CD8-positive, alpha-beta T cell (primary cell): ENCODE measurements at regions of chr5 and their contacts with region 1.

Region 1: GRCh38 chr5:176537608-176538504 is 654 bp upstream of the RNF44 start:
- DNase-seq: peak; percentile 94 to 100 (median 96)
- ATAC-seq: peak; percentile 70
- H3K4me3 ChIP-seq: peak overlapping the region; percentile 84 to 97
- H3K4me3 Mint-ChIP-seq: peak overlapping the region; percentile 98
- H3K27ac ChIP-seq: peak overlapping the region; percentile 95 to 99
- H3K27ac Mint-ChIP-seq: peak overlapping the region; percentile 100
- H3K4me1 ChIP-seq: peaks cover 70% of the 10 kb centered on the region
- H3K4me1 Mint-ChIP-seq: peaks cover 70% of the 10 kb centered on the region
- H3K27me3 ChIP-seq: no peaks in the 10 kb centered on the region
- H3K27me3 Mint-ChIP-seq: no peaks in the 10 kb centered on the region
- CTCF ChIP-seq: no peak

Region 2: DNA sequence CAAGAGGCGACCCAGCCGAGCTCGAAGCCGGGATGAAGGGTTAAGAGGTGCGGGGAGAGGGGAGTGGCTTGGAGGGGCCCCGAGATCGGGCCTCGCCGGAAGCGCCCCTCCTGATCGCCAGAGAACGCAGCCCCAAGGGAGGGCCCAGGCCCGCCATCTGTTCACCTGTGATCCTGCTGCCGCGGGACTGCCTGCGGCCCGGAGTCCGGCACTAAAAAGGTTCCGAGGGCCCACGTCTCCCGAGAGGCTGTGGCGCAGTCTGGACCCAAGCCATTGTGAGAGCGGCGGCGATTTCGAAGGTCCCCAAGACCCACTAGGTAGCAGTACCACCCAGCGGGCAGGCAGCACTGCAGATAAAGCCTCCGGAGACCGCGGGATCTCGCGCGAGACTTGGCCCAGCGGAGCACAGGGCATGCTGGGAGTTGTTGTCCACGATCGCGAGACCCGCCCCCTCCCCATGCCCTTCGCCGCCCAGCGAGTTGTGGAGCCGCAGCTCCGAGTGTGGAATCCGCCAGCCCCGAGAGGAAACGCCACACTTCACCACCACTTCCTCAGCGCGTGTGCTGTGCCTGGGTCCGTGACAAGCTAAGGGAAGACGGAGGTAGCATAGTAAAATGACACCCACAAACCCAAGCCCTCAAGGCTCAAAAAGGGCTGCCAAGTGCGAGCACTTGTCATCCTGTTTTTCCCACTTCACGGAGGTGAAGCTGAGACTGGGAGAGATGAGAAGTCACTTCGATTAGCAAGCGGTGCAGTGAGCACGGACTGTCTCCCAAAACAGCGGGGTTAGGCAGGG is 176.2 kb before region 1 on chr5 and contains the start of gene KIAA1191:
- CTCF ChIA-PET with region 1: no interaction called
- POLR2A ChIA-PET with region 1: interaction called, 15 read pairs
- intact Hi-C with region 1: loop called (anchors 1 to 2 kb)
- DNase-seq: peak; percentile 91 to 98 (median 95)
- ATAC-seq: peak; percentile 89
- H3K4me3 ChIP-seq: peak within 1 kb of the TSS; percentile 72 to 96
- H3K4me3 Mint-ChIP-seq: peak within 1 kb of the TSS; percentile 98
- H3K27ac ChIP-seq: peak within 1 kb of the TSS; percentile 68 to 86
- H3K27ac Mint-ChIP-seq: peak within 1 kb of the TSS; percentile 98
- H3K4me1 ChIP-seq: peaks cover 31% of the 10 kb centered on the region
- H3K4me1 Mint-ChIP-seq: peaks cover 41% of the 10 kb centered on the region
- H3K27me3 ChIP-seq: no peaks in the 10 kb centered on the region
- H3K27me3 Mint-ChIP-seq: no peaks in the 10 kb centered on the region
- CTCF ChIP-seq: no peak
- total RNA-seq, gene KIAA1191: 78.2 to 85.1 TPM

Region 3: GRCh38 chr5:176447982-176448608 is 89.8 kb before region 1 on chr5 and contains the start of gene FAF2:
- CTCF ChIA-PET with region 1: interaction called, 11 read pairs
- POLR2A ChIA-PET with region 1: interaction called, 75 read pairs
- intact Hi-C with region 1: loop called (anchors 1 to 2 kb)
- DNase-seq: peak; percentile 94 to 100 (median 98)
- ATAC-seq: peak; percentile 96
- H3K4me3 ChIP-seq: peak within 1 kb of the TSS; percentile 75 to 86
- H3K4me3 Mint-ChIP-seq: peak within 1 kb of the TSS; percentile 99
- H3K27ac ChIP-seq: peak within 1 kb of the TSS; percentile 89 to 90
- H3K27ac Mint-ChIP-seq: peak within 1 kb of the TSS; percentile 99
- H3K4me1 ChIP-seq: peaks cover 26% of the 10 kb centered on the region
- H3K4me1 Mint-ChIP-seq: peaks cover 38% of the 10 kb centered on the region
- H3K27me3 ChIP-seq: no peaks in the 10 kb centered on the region
- H3K27me3 Mint-ChIP-seq: no peaks in the 10 kb centered on the region
- CTCF ChIP-seq: peak; percentile 92
- total RNA-seq, gene FAF2: 24.7 to 24.8 TPM

Region 4: GRCh38 chr5:176553262-176554077 is 15.6 kb after region 1 on chr5:
- CTCF ChIA-PET with region 1: interaction called, 10 read pairs
- POLR2A ChIA-PET with region 1: interaction called, 12 read pairs
- intact Hi-C with region 1: no loop called
- DNase-seq: no peak
- ATAC-seq: no peak
- H3K4me3 ChIP-seq: no peak overlapping the region
- H3K4me3 Mint-ChIP-seq: no peak overlapping the region
- H3K27ac ChIP-seq: no peak overlapping the region
- H3K27ac Mint-ChIP-seq: peak overlapping the region; percentile 74
- H3K4me1 ChIP-seq: peaks cover 56% of the 10 kb centered on the region
- H3K4me1 Mint-ChIP-seq: peaks cover 47% of the 10 kb centered on the region
- H3K27me3 ChIP-seq: no peaks in the 10 kb centered on the region
- H3K27me3 Mint-ChIP-seq: no peaks in the 10 kb centered on the region
- CTCF ChIP-seq: no peak

Region 5: DNA sequence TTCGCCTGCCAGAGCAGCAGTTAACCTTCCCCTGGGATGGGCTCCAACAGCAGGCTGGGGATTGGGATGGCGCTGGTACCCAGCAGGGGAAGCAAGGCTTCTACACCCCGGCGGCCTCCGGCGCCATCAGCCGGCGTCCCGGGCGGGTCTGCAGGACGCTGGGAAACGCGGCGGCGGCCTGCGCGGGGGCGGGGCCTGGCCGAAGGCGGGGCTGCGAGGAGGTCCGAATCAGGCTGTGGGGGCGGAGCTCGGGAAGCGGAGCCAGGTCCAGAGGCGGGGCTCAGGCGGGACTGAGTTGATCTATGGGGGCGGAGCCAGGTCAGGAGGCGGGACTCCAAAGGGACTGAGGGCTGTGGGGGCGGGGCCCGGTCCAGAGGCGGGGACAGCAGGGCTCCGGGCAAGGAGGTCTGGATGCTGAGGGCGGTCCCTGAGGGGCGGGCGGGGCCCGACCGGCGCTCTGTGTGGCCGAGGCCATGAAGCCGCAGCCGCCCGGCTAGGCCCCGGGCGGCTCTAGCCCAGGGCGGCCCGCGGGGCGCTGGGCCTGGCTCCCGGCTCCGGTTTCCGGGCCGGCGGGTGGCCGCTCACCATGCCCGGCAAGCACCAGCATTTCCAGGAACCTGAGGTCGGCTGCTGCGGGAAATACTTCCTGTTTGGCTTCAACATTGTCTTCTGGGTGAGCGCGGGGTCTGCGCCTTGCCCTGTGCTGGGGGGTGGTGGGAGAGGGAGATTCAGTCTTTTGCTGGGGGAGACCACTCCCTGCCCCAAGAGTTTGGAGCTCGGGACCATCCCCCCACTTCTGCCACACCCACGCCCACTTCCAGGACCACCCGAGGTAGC is 109.4 kb after region 1 on chr5 and contains the start of gene TSPAN17:
- CTCF ChIA-PET with region 1: no interaction called
- POLR2A ChIA-PET with region 1: interaction called, 5 read pairs
- intact Hi-C with region 1: loop called (anchors 1 to 2 kb)
- DNase-seq: peak; percentile 93 to 99 (median 99)
- ATAC-seq: peak; percentile 89
- H3K4me3 ChIP-seq: peak within 1 kb of the TSS; percentile 66 to 67
- H3K4me3 Mint-ChIP-seq: peak within 1 kb of the TSS; percentile 89
- H3K27ac ChIP-seq: peak within 1 kb of the TSS; percentile 45 to 72
- H3K27ac Mint-ChIP-seq: peak within 1 kb of the TSS; percentile 90
- H3K4me1 ChIP-seq: peaks cover 50% of the 10 kb centered on the region
- H3K4me1 Mint-ChIP-seq: peaks cover 53% of the 10 kb centered on the region
- H3K27me3 ChIP-seq: no peaks in the 10 kb centered on the region
- H3K27me3 Mint-ChIP-seq: no peaks in the 10 kb centered on the region
- CTCF ChIP-seq: no peak
- total RNA-seq, gene TSPAN17: 9.5 to 9.8 TPM

Region 6: GRCh38 chr5:177370488-177371119 is 832.7 kb after region 1 on chr5:
- CTCF ChIA-PET with region 1: no interaction called
- POLR2A ChIA-PET with region 1: no interaction called
- intact Hi-C with region 1: loop called in 1 of 2 experiments (anchors 5 kb)
- DNase-seq: peak in 8 of 9 experiments; percentile 18 to 81 (median 58)
- ATAC-seq: peak; percentile 63
- H3K4me3 ChIP-seq: no peak overlapping the region
- H3K4me3 Mint-ChIP-seq: no peak overlapping the region
- H3K27ac ChIP-seq: peak overlapping the region in 1 of 2 experiments; percentile 48
- H3K27ac Mint-ChIP-seq: peak overlapping the region; percentile 32
- H3K4me1 ChIP-seq: peaks cover 73% of the 10 kb centered on the region
- H3K4me1 Mint-ChIP-seq: peaks cover 69% of the 10 kb centered on the region
- H3K27me3 ChIP-seq: no peaks in the 10 kb centered on the region
- H3K27me3 Mint-ChIP-seq: no peaks in the 10 kb centered on the region
- CTCF ChIP-seq: no peak